Activated CD4-positive, alpha-beta memory T cell treated with anti-CD3 and anti-CD28 coated beads for 36 hours (primary cell): ENCODE measurements at regions of chr20 and their contacts with region 1.

Region 1: DNA sequence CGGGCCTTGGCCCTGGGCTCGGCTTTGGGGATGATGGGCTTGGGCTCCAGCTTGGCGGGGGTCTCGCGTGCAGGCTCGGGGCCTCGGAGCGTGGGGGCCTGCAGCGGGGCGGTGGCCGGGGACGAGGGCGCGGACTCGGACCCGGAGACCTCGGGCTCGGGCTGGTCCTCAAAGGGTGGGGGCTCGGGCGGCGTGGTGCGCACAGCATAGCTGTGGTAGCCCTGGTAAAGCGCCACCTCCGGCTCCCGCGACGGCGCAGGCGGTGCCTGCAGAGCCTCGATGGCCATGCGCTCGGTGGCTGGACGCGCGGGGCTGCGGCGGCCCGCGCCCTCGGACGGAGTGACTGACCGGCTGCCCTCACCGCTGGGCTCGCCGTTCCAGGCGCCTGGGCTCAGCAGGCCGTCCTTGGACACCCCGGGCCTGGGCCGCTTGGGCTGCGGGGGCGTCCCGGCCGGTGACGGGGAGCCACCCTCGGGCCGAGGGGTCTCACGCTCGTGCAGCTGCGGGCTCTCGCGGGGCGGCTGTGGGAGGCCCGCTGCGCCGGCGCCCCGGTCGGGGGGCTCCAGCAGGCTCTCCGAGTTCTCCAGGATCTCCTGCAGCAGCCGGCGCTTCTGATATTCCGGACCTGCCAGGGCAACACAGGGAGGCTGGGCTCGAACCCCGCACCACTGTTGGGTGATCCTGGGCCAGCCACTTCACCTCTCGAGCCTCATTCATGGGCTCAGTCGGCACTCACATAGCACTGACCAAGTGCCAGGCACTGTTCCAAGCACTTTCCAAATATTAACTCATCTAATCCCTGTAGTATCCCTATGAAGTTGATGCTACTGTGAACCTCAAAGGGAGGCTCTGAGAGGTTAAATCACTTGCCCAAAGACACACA is 71.0 kb downstream of the JPH2 start:
- DNase-seq: no peak
- H3K4me3 Mint-ChIP-seq: no peak overlapping the region
- H3K27ac Mint-ChIP-seq: no peak overlapping the region
- H3K4me1 Mint-ChIP-seq: peaks cover 4% of the 10 kb centered on the region
- H3K27me3 Mint-ChIP-seq: peaks cover 31% of the 10 kb centered on the region

Region 2: DNA sequence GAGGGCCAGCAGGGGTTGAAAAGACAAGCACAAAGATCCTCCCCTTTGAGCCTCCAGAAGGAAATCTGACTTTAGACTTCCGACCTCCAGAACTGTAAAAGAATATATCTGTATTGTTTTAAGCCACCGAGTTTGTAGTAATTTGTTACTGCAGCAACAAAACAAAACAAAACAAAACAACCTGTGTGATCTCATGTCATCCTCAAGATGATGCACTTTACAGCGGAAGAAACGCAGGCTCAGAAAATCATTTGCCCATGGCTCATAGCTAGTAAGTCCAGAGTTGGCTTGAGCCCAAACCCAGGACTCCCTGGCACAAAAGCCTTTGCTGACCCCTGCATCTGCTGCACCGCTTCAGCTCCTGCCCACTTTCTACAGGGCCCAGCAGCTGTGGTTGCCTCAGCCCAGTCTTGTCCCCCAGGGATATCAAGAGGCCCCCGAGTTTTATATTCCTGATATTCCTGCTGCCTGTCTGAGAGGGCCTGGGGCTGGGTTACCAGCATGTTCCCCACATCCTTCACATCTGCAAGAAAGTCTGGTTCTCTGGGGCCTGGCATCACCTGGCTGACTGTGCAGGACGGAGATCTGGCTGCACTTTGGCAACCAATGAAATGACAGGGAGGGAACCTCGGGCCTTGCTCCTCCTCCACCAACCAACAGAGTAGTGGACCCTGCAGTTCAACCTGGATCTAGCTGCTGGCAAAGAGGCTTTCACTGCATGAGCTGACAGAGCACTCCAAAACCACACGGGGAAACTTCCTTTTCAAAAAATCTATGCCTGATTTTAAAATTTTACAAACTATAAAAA is 14.1 kb after region 1 on chr20:
- CTCF ChIA-PET with region 1: interaction called, 19 read pairs
- POLR2A ChIA-PET with region 1: no interaction called
- intact Hi-C with region 1: no loop called
- DNase-seq: no peak
- H3K4me3 Mint-ChIP-seq: no peak overlapping the region
- H3K27ac Mint-ChIP-seq: no peak overlapping the region
- H3K4me1 Mint-ChIP-seq: no peaks in the 10 kb centered on the region
- H3K27me3 Mint-ChIP-seq: peaks cover 9% of the 10 kb centered on the region

Region 3: GRCh38 chr20:44180814-44181213 is 64.8 kb after region 1 on chr20:
- CTCF ChIA-PET with region 1: interaction called, 174 read pairs
- POLR2A ChIA-PET with region 1: no interaction called
- intact Hi-C with region 1: no loop called
- DNase-seq: no peak
- H3K4me3 Mint-ChIP-seq: no peak overlapping the region
- H3K27ac Mint-ChIP-seq: no peak overlapping the region
- H3K4me1 Mint-ChIP-seq: no peaks in the 10 kb centered on the region
- H3K27me3 Mint-ChIP-seq: peaks cover 27% of the 10 kb centered on the region

Region 4: GRCh38 chr20:44187051-44187762 is 71.2 kb after region 1 on chr20 and contains the start of gene JPH2:
- CTCF ChIA-PET with region 1: interaction called, 174 read pairs
- POLR2A ChIA-PET with region 1: no interaction called
- intact Hi-C with region 1: loop called (anchors 1 kb)
- DNase-seq: no peak
- H3K4me3 Mint-ChIP-seq: no peak within 1 kb of the TSS
- H3K27ac Mint-ChIP-seq: no peak within 1 kb of the TSS
- H3K4me1 Mint-ChIP-seq: peaks cover 6% of the 10 kb centered on the region
- H3K27me3 Mint-ChIP-seq: peaks cover 48% of the 10 kb centered on the region
- total RNA-seq, gene JPH2: not detected

Region 5: DNA sequence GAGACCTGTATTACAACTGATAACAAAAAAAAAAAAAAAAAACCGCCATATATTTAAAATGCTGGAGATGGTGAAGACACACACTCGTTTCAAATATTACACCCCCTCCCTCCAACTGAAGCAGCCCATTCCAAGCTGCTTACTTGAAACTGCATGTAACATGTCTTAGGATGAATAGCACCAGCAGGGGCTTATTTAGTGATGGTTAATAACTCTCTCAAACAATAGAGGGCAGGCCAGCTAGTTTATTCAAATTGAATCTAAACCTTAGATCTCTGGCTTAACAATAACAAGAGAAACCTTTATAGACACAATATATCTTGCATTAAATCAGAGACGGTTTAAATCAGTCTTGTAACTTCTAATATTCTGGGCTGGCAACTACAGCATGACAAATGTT is 80.3 kb after region 1 on chr20:
- CTCF ChIA-PET with region 1: interaction called, 174 read pairs
- POLR2A ChIA-PET with region 1: no interaction called
- intact Hi-C with region 1: no loop called
- DNase-seq: no peak
- H3K4me3 Mint-ChIP-seq: no peak overlapping the region
- H3K27ac Mint-ChIP-seq: no peak overlapping the region
- H3K4me1 Mint-ChIP-seq: peaks cover 18% of the 10 kb centered on the region
- H3K27me3 Mint-ChIP-seq: no peaks in the 10 kb centered on the region